ENCODE measurements at regions of chr12 and their contacts with region 1.

Region 1: DNA sequence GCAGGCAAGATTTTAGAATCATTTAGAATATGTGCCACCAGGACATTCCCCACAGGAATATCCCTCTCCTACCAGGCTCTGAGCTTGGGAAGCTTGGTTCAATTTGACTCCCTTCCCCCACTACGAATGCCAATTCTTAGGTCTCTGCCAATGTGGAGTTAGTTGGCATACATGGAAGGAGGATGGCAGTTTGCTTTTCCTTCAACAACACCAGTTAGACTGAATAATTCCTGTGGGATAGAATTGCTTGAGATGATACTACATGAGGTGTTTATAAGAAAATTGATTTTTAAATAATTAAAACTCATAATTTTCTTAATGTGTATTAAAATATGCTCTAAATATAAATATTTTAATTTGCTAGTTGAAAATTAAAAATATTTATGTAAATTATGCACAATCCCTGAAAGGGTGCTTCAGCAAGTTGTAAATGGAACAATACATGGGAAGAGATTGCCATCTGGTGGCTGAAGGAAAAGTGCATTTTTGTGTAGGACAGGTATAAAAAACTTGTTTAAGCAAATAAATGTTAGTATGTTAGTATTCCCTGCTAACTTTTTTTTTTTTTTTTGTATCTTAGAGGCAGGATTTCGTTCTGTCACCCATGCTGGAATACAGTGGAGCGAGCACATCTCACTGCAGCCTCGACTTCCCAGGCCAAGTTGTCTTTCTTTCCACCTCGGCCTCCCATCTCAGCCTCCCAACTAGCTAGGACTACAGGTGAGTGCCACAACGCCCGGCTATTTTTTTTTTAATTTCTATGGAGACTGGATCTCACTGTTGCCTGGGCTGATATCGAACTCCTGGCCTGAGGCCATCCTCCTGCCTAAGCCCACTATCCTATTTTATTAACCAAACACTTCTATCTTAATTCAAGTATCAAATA is 25.8 kb upstream of the STRAP start:
- DNase-seq: peak in 1 of 2 donors; percentile 81
- ATAC-seq: peak in 2 of 3 donors; percentile 55 to 63
- H3K4me3 ChIP-seq: no peak overlapping the region
- H3K4me3 Mint-ChIP-seq: no peak overlapping the region
- H3K27ac ChIP-seq: no peak overlapping the region
- H3K27ac Mint-ChIP-seq: no peak overlapping the region
- H3K4me1 ChIP-seq: no peaks in the 10 kb centered on the region
- H3K4me1 Mint-ChIP-seq: no peaks in the 10 kb centered on the region
- H3K27me3 ChIP-seq: no peaks in the 10 kb centered on the region
- H3K27me3 Mint-ChIP-seq: peaks cover 8 to 50% of the 10 kb centered on the region in 2 donors
- CTCF ChIP-seq: peak; percentile 76

Region 2: GRCh38 chr12:15276088-15276698 is 580.1 kb before region 1 on chr12:
- intact Hi-C with region 1: loop called (anchors 2 kb)
- DNase-seq: peak in 1 of 2 donors; percentile 40
- ATAC-seq: no peak
- H3K4me3 ChIP-seq: no peak overlapping the region
- H3K4me3 Mint-ChIP-seq: no peak overlapping the region
- H3K27ac ChIP-seq: no peak overlapping the region
- H3K27ac Mint-ChIP-seq: no peak overlapping the region
- H3K4me1 ChIP-seq: peaks cover 12% of the 10 kb centered on the region
- H3K4me1 Mint-ChIP-seq: peaks cover 18 to 20% of the 10 kb centered on the region in 2 donors
- H3K27me3 ChIP-seq: peaks cover under 1% of the 10 kb centered on the region
- H3K27me3 Mint-ChIP-seq: peaks cover 3 to 7% of the 10 kb centered on the region in 2 donors
- CTCF ChIP-seq: peak; percentile 66

Region 3: GRCh38 chr12:15590180-15590826 is 266.0 kb before region 1 on chr12:
- intact Hi-C with region 1: loop called (anchors 1 kb)
- DNase-seq: peak in 1 of 2 donors; percentile 81
- ATAC-seq: peak; percentile 83 to 97 (median 97)
- H3K4me3 ChIP-seq: no peak overlapping the region
- H3K4me3 Mint-ChIP-seq: peak overlapping the region; percentile 65
- H3K27ac ChIP-seq: no peak overlapping the region
- H3K27ac Mint-ChIP-seq: peak overlapping the region; percentile 24 to 68
- H3K4me1 ChIP-seq: peaks cover 5% of the 10 kb centered on the region
- H3K4me1 Mint-ChIP-seq: peaks cover 9 to 11% of the 10 kb centered on the region in 2 donors
- H3K27me3 ChIP-seq: peaks cover 2% of the 10 kb centered on the region
- H3K27me3 Mint-ChIP-seq: peaks cover 6 to 16% of the 10 kb centered on the region in 2 donors
- CTCF ChIP-seq: peak; percentile 90

Region 4: DNA sequence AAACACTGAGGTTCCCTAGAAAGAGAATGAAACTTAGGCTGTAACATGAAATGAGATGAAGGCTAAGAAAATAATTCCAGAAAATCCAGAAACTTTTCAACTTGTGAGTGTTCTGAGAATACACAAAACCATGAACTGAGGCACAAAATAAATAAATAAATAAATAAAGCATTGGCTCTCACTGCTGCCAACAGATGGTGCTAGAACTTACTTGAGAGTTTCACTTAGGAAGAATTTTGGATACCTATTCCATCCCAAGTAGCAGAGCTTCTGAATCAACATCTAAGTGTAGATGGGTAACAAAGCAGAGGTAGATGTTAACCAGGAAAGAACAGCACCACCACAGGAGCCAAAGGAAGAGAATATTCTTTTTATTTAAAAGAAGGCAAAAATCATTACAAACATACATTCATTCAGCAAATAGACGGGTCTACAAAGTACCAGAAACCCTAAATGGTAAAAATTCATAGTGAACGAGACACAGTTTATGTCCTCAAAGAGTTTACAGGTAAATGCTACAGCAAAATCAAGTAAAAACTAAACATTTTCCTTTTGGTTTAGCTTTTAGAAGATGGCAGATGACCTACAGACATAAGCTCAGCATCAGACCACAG is 83.8 kb before region 1 on chr12:
- intact Hi-C with region 1: loop called (anchors 1 kb)
- DNase-seq: peak in 1 of 2 donors; percentile 48
- ATAC-seq: no peak
- H3K4me3 ChIP-seq: no peak overlapping the region
- H3K4me3 Mint-ChIP-seq: no peak overlapping the region
- H3K27ac ChIP-seq: no peak overlapping the region
- H3K27ac Mint-ChIP-seq: no peak overlapping the region
- H3K4me1 ChIP-seq: no peaks in the 10 kb centered on the region
- H3K4me1 Mint-ChIP-seq: peaks cover 0 to under 1% of the 10 kb centered on the region in 2 donors
- H3K27me3 ChIP-seq: no peaks in the 10 kb centered on the region
- H3K27me3 Mint-ChIP-seq: peaks cover 7 to 10% of the 10 kb centered on the region in 2 donors
- CTCF ChIP-seq: peak; percentile 43

Measured in natural killer cell (primary cell).